Naive thymus-derived CD8-positive, alpha-beta T cell (primary cell): ENCODE measurements at regions of chr11 and their contacts with region 1.

Region 1: GRCh38 chr11:102451681-102452460 is 694 bp downstream of the TMEM123 start:
- DNase-seq: peak; percentile 63 to 86 (median 78)
- ATAC-seq: peak; percentile 58 to 66
- H3K4me3 Mint-ChIP-seq: peak overlapping the region; percentile 88 to 100 (median 95)
- H3K27ac Mint-ChIP-seq: peak overlapping the region; percentile 90 to 99 (median 96)
- H3K4me1 Mint-ChIP-seq: peaks cover 43 to 80% (median 75%) of the 10 kb centered on the region in 4 donors
- H3K27me3 Mint-ChIP-seq: no peaks in the 10 kb centered on the region

Region 2: GRCh38 chr11:102320679-102321078 is 131.2 kb before region 1 on chr11:
- POLR2A ChIA-PET with region 1: no interaction called
- DNase-seq: no peak
- ATAC-seq: no peak
- H3K4me3 Mint-ChIP-seq: peak overlapping the region; percentile 88 to 99 (median 96)
- H3K27ac Mint-ChIP-seq: peak overlapping the region; percentile 71 to 100 (median 91)
- H3K4me1 Mint-ChIP-seq: peaks cover 26 to 73% (median 67%) of the 10 kb centered on the region in 4 donors
- H3K27me3 Mint-ChIP-seq: no peaks in the 10 kb centered on the region

Region 3: DNA sequence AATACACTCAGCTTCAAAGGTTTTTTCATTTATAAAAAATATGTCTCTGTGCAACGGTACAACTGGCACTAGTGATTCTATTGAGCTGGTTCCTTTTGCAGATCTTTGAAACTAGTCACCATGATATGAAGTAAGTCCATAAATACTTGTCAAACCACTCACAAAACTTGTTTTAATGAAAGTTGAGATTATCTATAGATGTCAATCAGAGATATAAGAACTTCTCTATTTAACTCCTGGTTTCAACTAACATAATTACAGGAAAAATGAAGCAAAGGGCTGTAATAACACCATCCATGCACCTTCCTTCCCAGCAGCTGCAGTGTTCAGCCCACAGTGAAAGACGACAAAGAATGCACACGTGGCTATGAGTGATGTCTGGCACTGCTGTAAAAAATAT is 44.0 kb before region 1 on chr11:
- POLR2A ChIA-PET with region 1: interaction called, 14 read pairs
- DNase-seq: no peak
- ATAC-seq: no peak
- H3K4me3 Mint-ChIP-seq: peak overlapping the region in 8 of 10 donors; percentile 20 to 68 (median 47)
- H3K27ac Mint-ChIP-seq: peak overlapping the region in 8 of 10 donors; percentile 13 to 90 (median 63)
- H3K4me1 Mint-ChIP-seq: peaks cover 41 to 86% (median 79%) of the 10 kb centered on the region in 4 donors
- H3K27me3 Mint-ChIP-seq: no peaks in the 10 kb centered on the region

Region 4: GRCh38 chr11:102427068-102427467 is 24.8 kb before region 1 on chr11:
- POLR2A ChIA-PET with region 1: interaction called, 10 read pairs
- DNase-seq: no peak
- ATAC-seq: no peak
- H3K4me3 Mint-ChIP-seq: peak overlapping the region in 9 of 10 donors; percentile 0 to 82 (median 68)
- H3K27ac Mint-ChIP-seq: peak overlapping the region; percentile 16 to 97 (median 94)
- H3K4me1 Mint-ChIP-seq: peaks cover 48 to 93% (median 86%) of the 10 kb centered on the region in 4 donors
- H3K27me3 Mint-ChIP-seq: no peaks in the 10 kb centered on the region

Region 5: GRCh38 chr11:102467056-102467708 is 15.3 kb after region 1 on chr11:
- POLR2A ChIA-PET with region 1: interaction called, 13 read pairs
- DNase-seq: no peak
- ATAC-seq: no peak
- H3K4me3 Mint-ChIP-seq: peak overlapping the region in 6 of 10 donors; percentile 36 to 66 (median 52)
- H3K27ac Mint-ChIP-seq: peak overlapping the region in 4 of 10 donors; percentile 3 to 81 (median 18)
- H3K4me1 Mint-ChIP-seq: peaks cover 41 to 91% (median 87%) of the 10 kb centered on the region in 4 donors
- H3K27me3 Mint-ChIP-seq: no peaks in the 10 kb centered on the region

Region 6: GRCh38 chr11:102824556-102824955 is 372.7 kb after region 1 on chr11:
- POLR2A ChIA-PET with region 1: no interaction called
- DNase-seq: no peak
- ATAC-seq: no peak
- H3K4me3 Mint-ChIP-seq: no peak overlapping the region
- H3K27ac Mint-ChIP-seq: no peak overlapping the region
- H3K4me1 Mint-ChIP-seq: no peaks in the 10 kb centered on the region
- H3K27me3 Mint-ChIP-seq: peaks cover 11 to 24% (median 14%) of the 10 kb centered on the region in 5 donors